Activated CD8-positive, alpha-beta T cell treated with anti-CD3 and anti-CD28 coated beads for 36 hours (primary cell): ENCODE measurements at regions of chr4 and their contacts with region 1.

Region 1: GRCh38 chr4:68375667-68376559 is 26.0 kb upstream of the YTHDC1 start:
- DNase-seq: peak; percentile 65
- ATAC-seq: peak; percentile 84
- H3K4me3 Mint-ChIP-seq: peak overlapping the region; percentile 69
- H3K27ac Mint-ChIP-seq: no peak overlapping the region
- H3K4me1 Mint-ChIP-seq: peaks cover 7% of the 10 kb centered on the region
- H3K27me3 Mint-ChIP-seq: peaks cover under 1% of the 10 kb centered on the region
- CTCF ChIP-seq: peak; percentile 71

Region 2: GRCh38 chr4:68184923-68185322 is 191.0 kb before region 1 on chr4:
- CTCF ChIA-PET with region 1: no interaction called
- POLR2A ChIA-PET with region 1: no interaction called
- intact Hi-C with region 1: no loop called
- DNase-seq: no peak
- ATAC-seq: no peak
- H3K4me3 Mint-ChIP-seq: no peak overlapping the region
- H3K27ac Mint-ChIP-seq: no peak overlapping the region
- H3K4me1 Mint-ChIP-seq: no peaks in the 10 kb centered on the region
- H3K27me3 Mint-ChIP-seq: peaks cover 6% of the 10 kb centered on the region
- CTCF ChIP-seq: no peak

Region 3: GRCh38 chr4:68271851-68272756 is 103.8 kb before region 1 on chr4:
- CTCF ChIA-PET with region 1: interaction called, 52 read pairs
- POLR2A ChIA-PET with region 1: no interaction called
- intact Hi-C with region 1: loop called (anchors 1 kb)
- DNase-seq: peak; percentile 11
- ATAC-seq: peak; percentile 83
- H3K4me3 Mint-ChIP-seq: peak overlapping the region; percentile 23
- H3K27ac Mint-ChIP-seq: no peak overlapping the region
- H3K4me1 Mint-ChIP-seq: peaks cover 10% of the 10 kb centered on the region
- H3K27me3 Mint-ChIP-seq: peaks cover 23% of the 10 kb centered on the region
- CTCF ChIP-seq: peak; percentile 80

Region 4: GRCh38 chr4:68324519-68325262 is 51.2 kb before region 1 on chr4:
- CTCF ChIA-PET with region 1: interaction called, 10 read pairs
- POLR2A ChIA-PET with region 1: no interaction called
- intact Hi-C with region 1: no loop called
- DNase-seq: no peak
- ATAC-seq: no peak
- H3K4me3 Mint-ChIP-seq: no peak overlapping the region
- H3K27ac Mint-ChIP-seq: peak overlapping the region; percentile 50
- H3K4me1 Mint-ChIP-seq: peaks cover 6% of the 10 kb centered on the region
- H3K27me3 Mint-ChIP-seq: no peaks in the 10 kb centered on the region
- CTCF ChIP-seq: no peak

Region 5: GRCh38 chr4:68344049-68344448 is 31.9 kb before region 1 on chr4:
- CTCF ChIA-PET with region 1: interaction called, 11 read pairs
- POLR2A ChIA-PET with region 1: no interaction called
- intact Hi-C with region 1: no loop called
- DNase-seq: no peak
- ATAC-seq: no peak
- H3K4me3 Mint-ChIP-seq: peak overlapping the region; percentile 24
- H3K27ac Mint-ChIP-seq: peak overlapping the region; percentile 15
- H3K4me1 Mint-ChIP-seq: peaks cover 71% of the 10 kb centered on the region
- H3K27me3 Mint-ChIP-seq: no peaks in the 10 kb centered on the region
- CTCF ChIP-seq: no peak

Region 6: GRCh38 chr4:68352791-68353190 is 23.1 kb before region 1 on chr4:
- CTCF ChIA-PET with region 1: interaction called, 14 read pairs
- POLR2A ChIA-PET with region 1: no interaction called
- intact Hi-C with region 1: no loop called
- DNase-seq: no peak
- ATAC-seq: no peak
- H3K4me3 Mint-ChIP-seq: no peak overlapping the region
- H3K27ac Mint-ChIP-seq: no peak overlapping the region
- H3K4me1 Mint-ChIP-seq: peaks cover 5% of the 10 kb centered on the region
- H3K27me3 Mint-ChIP-seq: peaks cover 2% of the 10 kb centered on the region
- CTCF ChIP-seq: no peak

Region 7: GRCh38 chr4:68365068-68365467 is 10.8 kb before region 1 on chr4:
- CTCF ChIA-PET with region 1: interaction called, 24 read pairs
- POLR2A ChIA-PET with region 1: no interaction called
- intact Hi-C with region 1: no loop called
- DNase-seq: no peak
- ATAC-seq: no peak
- H3K4me3 Mint-ChIP-seq: no peak overlapping the region
- H3K27ac Mint-ChIP-seq: no peak overlapping the region
- H3K4me1 Mint-ChIP-seq: peaks cover 2% of the 10 kb centered on the region
- H3K27me3 Mint-ChIP-seq: peaks cover 5% of the 10 kb centered on the region
- CTCF ChIP-seq: no peak